K562 (cell line): ENCODE measurements at regions of chr19 and their contacts with region 1.

Region 1: GRCh38 chr19:44689056-44689895 is 9.7 kb upstream of the CEACAM16 start:
- DNase-seq: peak; percentile 69 to 84 (median 72)
- ATAC-seq: peak; percentile 90
- H3K4me3 ChIP-seq: no peak overlapping the region
- H3K27ac ChIP-seq: no peak overlapping the region
- H3K4me1 ChIP-seq: peaks cover 17 to 26% of the 10 kb centered on the region in 2 experiments
- H3K27me3 ChIP-seq: no peaks in the 10 kb centered on the region
- CTCF ChIP-seq: peak; percentile 89 to 92 (median 90)
- EP300 ChIP-seq: no peak
- POLR2A ChIP-seq: no peak
- RAD21 ChIP-seq: peak; percentile 83 to 90

Region 2: GRCh38 chr19:44723952-44724319 is 34.7 kb after region 1 on chr19:
- CTCF ChIA-PET with region 1: interaction called, 3 read pairs
- POLR2A ChIA-PET with region 1: interaction called, 5 read pairs
- in situ Hi-C with region 1: no loop called
- intact Hi-C with region 1: loop called (anchors 2 kb)
- DNase-seq: peak; percentile 83 to 88 (median 86)
- ATAC-seq: peak; percentile 94
- H3K4me3 ChIP-seq: no peak overlapping the region
- H3K27ac ChIP-seq: no peak overlapping the region
- H3K4me1 ChIP-seq: peaks cover 20 to 23% of the 10 kb centered on the region in 2 experiments
- H3K27me3 ChIP-seq: no peaks in the 10 kb centered on the region
- CTCF ChIP-seq: peak; percentile 94 to 98 (median 98)
- EP300 ChIP-seq: no peak
- POLR2A ChIP-seq: no peak
- RAD21 ChIP-seq: peak; percentile 98 to 99